ENCODE measurements at regions of chr2 and their contacts with region 1.

Region 1: DNA sequence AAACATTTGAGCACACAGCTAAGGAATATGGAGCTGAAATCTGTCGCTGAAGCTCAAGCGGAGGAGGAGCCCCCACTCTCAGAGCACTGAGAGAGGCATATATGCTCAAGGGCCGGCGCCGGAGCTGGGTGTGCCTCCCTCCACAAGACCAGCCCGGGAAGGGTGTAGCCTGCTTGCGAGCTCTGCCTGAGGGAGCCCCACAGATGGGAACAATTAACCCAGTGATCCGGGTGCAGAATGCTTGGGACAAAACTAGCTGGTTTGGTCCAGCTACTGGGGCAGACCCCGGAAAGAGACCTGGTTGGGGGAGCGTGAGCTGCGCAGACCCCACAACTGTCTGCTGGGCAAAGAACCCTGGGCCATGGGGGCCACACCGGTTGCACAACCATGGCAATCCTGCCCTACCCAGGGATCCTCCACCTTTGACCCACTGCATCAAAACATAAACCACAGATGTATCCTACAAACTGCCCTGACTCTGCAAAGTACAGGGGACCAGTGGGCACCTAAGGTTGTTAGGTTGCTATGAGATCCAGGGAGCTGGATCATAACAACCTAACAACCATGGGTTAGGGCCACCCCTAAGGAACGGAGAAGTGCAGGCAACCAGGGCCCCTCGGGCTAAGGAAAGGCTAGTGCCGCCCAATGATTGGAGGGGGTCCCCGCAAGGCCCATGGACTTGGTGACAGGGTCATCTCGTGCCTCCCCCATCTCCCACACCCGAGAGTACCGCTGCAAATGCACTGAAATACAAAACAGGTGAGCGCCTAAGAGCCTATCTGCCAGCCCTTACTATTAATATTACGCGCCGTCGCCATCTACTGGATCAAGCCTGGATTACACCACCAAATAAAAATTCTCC is 53.4 kb upstream of the SCN1A start:
- DNase-seq: no peak
- ATAC-seq: peak; percentile 94
- H3K4me3 ChIP-seq: no peak overlapping the region
- H3K27ac ChIP-seq: no peak overlapping the region
- H3K4me1 ChIP-seq: no peaks in the 10 kb centered on the region
- H3K27me3 ChIP-seq: no peaks in the 10 kb centered on the region; a peak in 1 of 4 replicates
- CTCF ChIP-seq: peak; percentile 51 to 57 (median 54); a peak in 5 of 6 replicates
- EP300 ChIP-seq: no peak
- POLR2A ChIP-seq: no peak
- RAD21 ChIP-seq: peak; percentile 49

Region 2: GRCh38 chr2:166057370-166058164 is 123.6 kb before region 1 on chr2:
- CTCF ChIA-PET with region 1: interaction called, 14 read pairs
- POLR2A ChIA-PET with region 1: no interaction called
- RAD21 ChIA-PET with region 1: interaction called, 6 read pairs
- SMC1A ChIA-PET with region 1: interaction called, 10 read pairs
- in situ Hi-C with region 1: no loop called
- intact Hi-C with region 1: no loop called
- DNase-seq: no peak
- ATAC-seq: no peak
- H3K4me3 ChIP-seq: no peak overlapping the region
- H3K27ac ChIP-seq: no peak overlapping the region
- H3K4me1 ChIP-seq: no peaks in the 10 kb centered on the region
- H3K27me3 ChIP-seq: no peaks in the 10 kb centered on the region
- CTCF ChIP-seq: peak in 2 of 3 experiments; percentile 27 to 36; a peak in 3 of 6 replicates
- EP300 ChIP-seq: no peak
- POLR2A ChIP-seq: no peak
- RAD21 ChIP-seq: peak; percentile 47